Right cardiac atrium (tissue), 5 donors: ENCODE measurements at regions of chr21 and their contacts with region 1.

Region 1: GRCh38 chr21:31198575-31198974 is 145.5 kb downstream of the TIAM1 start:
- DNase-seq: no peak
- ATAC-seq: peak in 1 of 2 donors; percentile 47
- H3K4me3 ChIP-seq: no peak overlapping the region
- H3K27ac ChIP-seq: no peak overlapping the region
- H3K4me1 ChIP-seq: no peaks in the 10 kb centered on the region
- H3K27me3 ChIP-seq: no peaks in the 10 kb centered on the region

Region 2: DNA sequence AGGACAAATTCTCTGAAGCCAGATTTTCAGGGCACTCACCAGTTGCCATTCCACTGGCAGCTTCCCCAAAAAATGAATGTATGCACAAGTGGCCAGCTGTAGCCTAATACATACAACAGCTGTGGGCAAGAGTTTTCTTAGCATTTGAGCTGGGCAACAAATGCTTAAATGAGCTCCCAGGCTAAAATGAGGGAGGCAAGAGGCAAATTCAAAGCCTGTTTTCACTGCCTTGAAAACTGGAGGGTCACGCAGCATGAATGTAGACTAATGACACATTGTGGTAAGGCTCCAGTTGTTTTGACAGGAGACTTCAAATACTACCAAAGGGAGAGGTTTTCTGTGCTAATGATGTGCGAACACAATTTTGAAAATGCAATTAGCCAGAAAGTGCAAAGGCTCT is 57.3 kb after region 1 on chr21:
- intact Hi-C with region 1: loop called in 1 of 4 experiments (anchors 10 kb)
- DNase-seq: no peak
- ATAC-seq: no peak
- H3K4me3 ChIP-seq: no peak overlapping the region
- H3K27ac ChIP-seq: no peak overlapping the region
- H3K4me1 ChIP-seq: peaks cover under 1% of the 10 kb centered on the region
- H3K27me3 ChIP-seq: no peaks in the 10 kb centered on the region

Region 3: DNA sequence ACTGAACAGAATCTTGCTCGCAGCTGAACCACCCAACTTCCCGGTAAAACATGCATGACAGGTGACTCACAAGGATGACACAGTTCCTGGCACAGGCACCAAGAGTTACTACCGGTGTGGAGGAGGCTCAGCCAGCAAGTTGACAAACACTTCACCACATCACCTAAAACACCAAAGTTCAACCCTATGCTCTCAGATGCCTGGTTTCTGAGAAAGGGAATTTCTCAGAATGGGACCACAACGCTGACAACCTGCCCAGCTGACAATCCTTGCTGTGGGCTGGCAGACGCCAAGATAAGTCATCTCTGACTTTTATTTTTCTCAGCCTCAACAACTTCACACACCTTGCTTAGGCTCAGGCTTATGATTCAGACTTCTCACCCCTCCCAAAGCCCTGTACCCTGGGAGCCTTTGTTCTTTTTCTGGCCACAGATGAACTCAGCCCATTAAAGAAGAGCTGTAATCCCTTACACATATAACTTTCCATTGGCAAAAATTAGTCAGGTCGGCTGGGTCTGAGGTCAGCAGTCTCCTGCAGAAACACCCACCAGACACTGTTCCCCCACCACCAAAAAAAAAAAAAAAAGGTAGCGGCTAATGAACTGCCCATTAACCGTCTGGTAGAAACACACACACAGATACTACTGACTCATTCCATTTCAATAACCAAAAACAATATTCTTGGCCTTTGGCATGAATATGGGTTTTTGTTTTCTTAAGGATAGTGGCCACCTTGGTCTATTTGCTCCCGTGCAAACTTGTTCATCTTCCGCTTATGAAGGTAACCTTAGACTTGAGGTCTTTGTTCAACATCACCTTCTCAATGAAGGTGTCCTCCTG is 156.2 kb after region 1 on chr21:
- intact Hi-C with region 1: loop called in 1 of 4 experiments (anchors 10 kb)
- DNase-seq: no peak
- ATAC-seq: peak in 1 of 2 donors; percentile 24
- H3K4me3 ChIP-seq: no peak overlapping the region
- H3K27ac ChIP-seq: no peak overlapping the region
- H3K4me1 ChIP-seq: no peaks in the 10 kb centered on the region
- H3K27me3 ChIP-seq: no peaks in the 10 kb centered on the region

Region 4: GRCh38 chr21:31580866-31581276 is 382.3 kb after region 1 on chr21:
- intact Hi-C with region 1: loop called in 3 of 4 experiments (anchors 2 to 5 kb)
- DNase-seq: peak; percentile 72 to 91 (median 80)
- ATAC-seq: peak; percentile 75 to 84
- H3K4me3 ChIP-seq: no peak overlapping the region
- H3K27ac ChIP-seq: no peak overlapping the region
- H3K4me1 ChIP-seq: no peaks in the 10 kb centered on the region
- H3K27me3 ChIP-seq: no peaks in the 10 kb centered on the region

Region 5: GRCh38 chr21:31592963-31593560 is 394.5 kb after region 1 on chr21:
- intact Hi-C with region 1: loop called in 1 of 4 experiments (anchors 10 kb)
- DNase-seq: no peak
- ATAC-seq: peak in 1 of 2 donors; percentile 48
- H3K4me3 ChIP-seq: no peak overlapping the region
- H3K27ac ChIP-seq: no peak overlapping the region
- H3K4me1 ChIP-seq: no peaks in the 10 kb centered on the region
- H3K27me3 ChIP-seq: no peaks in the 10 kb centered on the region

Region 6: GRCh38 chr21:31604591-31605190 is 406.1 kb after region 1 on chr21:
- intact Hi-C with region 1: loop called in 2 of 4 experiments (anchors 2 to 10 kb)
- DNase-seq: peak; percentile 70 to 86 (median 79)
- ATAC-seq: peak; percentile 67 to 72
- H3K4me3 ChIP-seq: no peak overlapping the region
- H3K27ac ChIP-seq: no peak overlapping the region
- H3K4me1 ChIP-seq: no peaks in the 10 kb centered on the region
- H3K27me3 ChIP-seq: no peaks in the 10 kb centered on the region